ENCODE measurements at regions of chr20 and their contacts with region 1.

Region 1: GRCh38 chr20:35240813-35241293 is 14.4 kb downstream of the MMP24 start:
- DNase-seq: no peak
- H3K4me3 ChIP-seq: no peak overlapping the region
- H3K4me3 Mint-ChIP-seq: no peak overlapping the region
- H3K27ac ChIP-seq: no peak overlapping the region
- H3K27ac Mint-ChIP-seq: no peak overlapping the region
- H3K4me1 ChIP-seq: no peaks in the 10 kb centered on the region
- H3K4me1 Mint-ChIP-seq: peaks cover 0 to 7% (median 0%) of the 10 kb centered on the region in 3 donors
- H3K27me3 ChIP-seq: peaks cover 13% of the 10 kb centered on the region
- H3K27me3 Mint-ChIP-seq: peaks cover 3 to 11% of the 10 kb centered on the region in 2 donors

Region 2: GRCh38 chr20:35269055-35269781 is 28.4 kb after region 1 on chr20:
- CTCF ChIA-PET with region 1: interaction called, 10 read pairs
- POLR2A ChIA-PET with region 1: no interaction called
- DNase-seq: peak; percentile 22 to 64 (median 35)
- H3K4me3 ChIP-seq: no peak overlapping the region
- H3K4me3 Mint-ChIP-seq: peak overlapping the region in 1 of 7 donors; percentile 14
- H3K27ac ChIP-seq: no peak overlapping the region
- H3K27ac Mint-ChIP-seq: peak overlapping the region in 7 of 8 donors; percentile 12 to 93 (median 57)
- H3K4me1 ChIP-seq: no peaks in the 10 kb centered on the region
- H3K4me1 Mint-ChIP-seq: peaks cover 5 to 20% (median 19%) of the 10 kb centered on the region in 3 donors
- H3K27me3 ChIP-seq: no peaks in the 10 kb centered on the region
- H3K27me3 Mint-ChIP-seq: no peaks in the 10 kb centered on the region